PC-9 (cell line): ENCODE measurements at regions of chr12 and their contacts with region 1.

Region 1: GRCh38 chr12:38906482-38907170 is 1.2 kb upstream of the CPNE8 start:
- DNase-seq: peak; percentile 67 to 87
- H3K4me3 ChIP-seq: peak overlapping the region; percentile 80
- H3K27ac ChIP-seq: peak overlapping the region; percentile 95; the same call in 1 of the 2 replicates
- H3K4me1 ChIP-seq: peaks cover 23% of the 10 kb centered on the region
- H3K27me3 ChIP-seq: no peaks in the 10 kb centered on the region
- CTCF ChIP-seq: peak; percentile 80

Region 2: DNA sequence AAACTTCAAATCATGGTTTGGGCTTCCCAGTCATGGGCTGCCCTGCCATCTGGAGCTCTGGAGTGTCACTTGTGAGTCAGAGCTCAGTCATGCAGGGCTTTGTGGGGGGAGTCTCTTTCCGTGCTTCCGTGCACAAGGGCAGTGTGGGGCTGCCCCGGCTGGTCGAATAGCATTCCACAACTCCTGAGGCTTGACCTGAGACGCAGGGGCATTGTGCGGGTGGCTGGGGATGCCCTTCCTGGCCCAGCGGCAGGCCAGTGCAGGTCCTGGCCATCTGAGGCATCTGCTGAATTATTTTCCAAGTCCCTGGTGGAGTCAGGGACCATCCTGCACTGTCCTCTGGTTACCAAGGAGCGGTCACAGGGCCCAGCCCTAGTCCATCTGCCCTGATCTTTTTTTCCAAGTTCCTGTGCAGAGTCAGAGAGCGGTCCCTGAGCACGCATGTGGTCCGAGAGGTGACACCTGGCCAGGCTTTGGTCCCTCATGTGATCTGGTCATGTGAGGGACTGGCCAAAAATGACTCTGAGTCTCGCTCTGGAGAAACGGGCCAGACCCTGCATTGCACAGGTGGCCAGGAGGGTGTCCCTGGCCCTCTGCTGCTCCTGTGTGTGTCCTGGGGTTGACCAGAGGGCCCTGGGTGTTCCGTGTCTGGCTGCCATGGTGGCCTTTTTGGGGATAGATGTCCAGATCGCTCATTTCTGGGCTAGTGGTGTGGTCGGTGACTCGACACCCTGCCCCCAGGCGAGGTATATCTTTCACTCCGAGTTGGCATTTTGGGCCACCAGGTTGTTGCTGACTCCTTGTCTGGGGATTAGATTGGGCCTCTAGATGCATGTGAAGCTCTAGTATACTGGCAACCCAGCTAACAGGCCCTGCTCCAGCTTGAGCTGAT is 757.0 kb before region 1 on chr12:
- CTCF ChIA-PET with region 1: no interaction called
- POLR2A ChIA-PET with region 1: no interaction called
- intact Hi-C with region 1: loop called (anchors 2 kb)
- DNase-seq: peak; percentile 91 to 93
- H3K4me3 ChIP-seq: no peak overlapping the region; the same call in 1 of the 2 replicates
- H3K27ac ChIP-seq: no peak overlapping the region; the same call in 1 of the 2 replicates
- H3K4me1 ChIP-seq: peaks cover 19% of the 10 kb centered on the region
- H3K27me3 ChIP-seq: peaks cover 12% of the 10 kb centered on the region
- CTCF ChIP-seq: no peak

Region 3: DNA sequence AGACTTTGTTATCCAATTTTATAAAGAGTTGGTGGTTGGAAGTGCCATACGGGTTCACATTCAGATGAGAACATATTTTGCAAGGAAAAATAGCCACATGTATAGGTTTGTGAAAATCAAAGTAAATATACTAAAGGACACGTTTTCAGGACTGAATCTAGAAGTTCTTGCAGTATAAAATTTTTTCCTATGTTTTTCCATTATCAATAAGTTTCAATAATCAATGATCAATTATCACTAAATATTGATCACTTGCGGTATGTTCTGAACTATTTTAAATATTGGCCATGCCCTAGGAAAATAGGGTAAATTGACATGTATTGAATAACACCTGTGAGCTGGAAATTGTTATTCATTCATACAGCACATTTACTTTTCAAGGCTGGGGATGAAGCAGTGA is 564.2 kb before region 1 on chr12:
- CTCF ChIA-PET with region 1: no interaction called
- POLR2A ChIA-PET with region 1: no interaction called
- intact Hi-C with region 1: loop called (anchors 5 kb)
- DNase-seq: no peak
- H3K4me3 ChIP-seq: no peak overlapping the region
- H3K27ac ChIP-seq: no peak overlapping the region
- H3K4me1 ChIP-seq: no peaks in the 10 kb centered on the region
- H3K27me3 ChIP-seq: no peaks in the 10 kb centered on the region
- CTCF ChIP-seq: no peak

Region 4: GRCh38 chr12:38508246-38508645 is 398.4 kb before region 1 on chr12:
- CTCF ChIA-PET with region 1: no interaction called
- POLR2A ChIA-PET with region 1: no interaction called
- intact Hi-C with region 1: loop called (anchors 10 kb)
- DNase-seq: peak; percentile 50 to 72
- H3K4me3 ChIP-seq: no peak overlapping the region
- H3K27ac ChIP-seq: no peak overlapping the region
- H3K4me1 ChIP-seq: peaks cover 12% of the 10 kb centered on the region
- H3K27me3 ChIP-seq: no peaks in the 10 kb centered on the region
- CTCF ChIP-seq: no peak

Region 5: DNA sequence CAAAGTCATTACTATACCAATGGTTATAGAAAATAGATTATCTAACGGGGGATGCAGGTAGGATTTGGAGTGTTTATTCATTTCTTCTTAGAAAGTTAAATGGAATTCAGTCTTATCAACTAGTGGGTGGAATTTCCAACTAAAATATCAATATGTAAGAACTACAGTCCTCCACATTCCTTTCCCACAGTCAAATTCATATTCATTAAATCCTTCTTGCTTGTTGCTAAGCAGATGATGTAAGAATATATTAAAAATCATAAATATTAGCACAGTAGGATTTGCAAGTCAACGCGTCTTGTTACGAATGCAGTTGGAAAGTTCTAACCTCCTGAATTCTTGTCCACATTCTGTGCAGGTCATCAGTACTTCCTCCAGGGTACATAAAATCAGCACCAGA is 260.5 kb before region 1 on chr12:
- CTCF ChIA-PET with region 1: no interaction called
- POLR2A ChIA-PET with region 1: no interaction called
- intact Hi-C with region 1: no loop called
- DNase-seq: no peak
- H3K4me3 ChIP-seq: no peak overlapping the region
- H3K27ac ChIP-seq: no peak overlapping the region
- H3K4me1 ChIP-seq: peaks cover 14% of the 10 kb centered on the region; the same call in 1 of the 2 replicates
- H3K27me3 ChIP-seq: no peaks in the 10 kb centered on the region
- CTCF ChIP-seq: no peak

Region 6: GRCh38 chr12:38664661-38665269 is 241.9 kb before region 1 on chr12:
- CTCF ChIA-PET with region 1: no interaction called
- POLR2A ChIA-PET with region 1: no interaction called
- intact Hi-C with region 1: loop called (anchors 10 kb)
- DNase-seq: no peak
- H3K4me3 ChIP-seq: no peak overlapping the region
- H3K27ac ChIP-seq: no peak overlapping the region
- H3K4me1 ChIP-seq: no peaks in the 10 kb centered on the region
- H3K27me3 ChIP-seq: no peaks in the 10 kb centered on the region
- CTCF ChIP-seq: peak; percentile 66

Region 7: DNA sequence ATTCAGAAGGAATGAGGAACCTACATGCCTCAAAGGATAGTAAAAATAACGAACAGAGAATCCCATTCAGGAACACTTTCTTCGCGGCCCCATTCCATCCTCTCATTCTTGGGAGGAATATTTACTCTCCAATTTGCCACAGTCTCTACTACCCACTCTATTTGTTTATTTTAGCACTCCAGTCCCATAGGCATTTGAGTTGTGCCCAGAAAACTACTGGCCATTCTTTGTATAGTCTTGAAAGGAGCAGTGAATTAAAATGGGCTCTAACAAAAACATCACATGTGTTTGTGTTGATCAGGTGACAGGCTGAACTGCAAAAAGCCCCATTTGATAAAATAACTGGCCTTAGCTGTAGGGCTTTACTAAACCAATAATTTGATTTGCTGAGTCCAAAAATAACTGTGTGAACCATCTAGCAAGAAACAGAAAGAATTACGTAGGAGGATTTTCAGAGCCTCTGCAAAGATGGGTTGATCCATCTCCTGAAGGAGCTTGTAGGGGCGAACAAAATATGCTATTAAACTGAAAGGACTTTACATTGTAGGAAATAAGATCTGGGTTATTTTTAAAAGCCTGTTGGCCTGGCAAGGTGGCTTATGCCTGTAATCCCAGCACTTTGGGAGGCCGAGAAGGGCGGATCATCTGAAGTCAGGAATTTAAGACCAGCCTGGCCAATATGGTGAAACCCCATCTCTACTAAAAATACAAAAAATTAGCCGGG is 141.1 kb after region 1 on chr12:
- CTCF ChIA-PET with region 1: no interaction called
- POLR2A ChIA-PET with region 1: no interaction called
- intact Hi-C with region 1: no loop called
- DNase-seq: no peak
- H3K4me3 ChIP-seq: no peak overlapping the region
- H3K27ac ChIP-seq: no peak overlapping the region
- H3K4me1 ChIP-seq: no peaks in the 10 kb centered on the region
- H3K27me3 ChIP-seq: no peaks in the 10 kb centered on the region
- CTCF ChIP-seq: no peak

Region 8: DNA sequence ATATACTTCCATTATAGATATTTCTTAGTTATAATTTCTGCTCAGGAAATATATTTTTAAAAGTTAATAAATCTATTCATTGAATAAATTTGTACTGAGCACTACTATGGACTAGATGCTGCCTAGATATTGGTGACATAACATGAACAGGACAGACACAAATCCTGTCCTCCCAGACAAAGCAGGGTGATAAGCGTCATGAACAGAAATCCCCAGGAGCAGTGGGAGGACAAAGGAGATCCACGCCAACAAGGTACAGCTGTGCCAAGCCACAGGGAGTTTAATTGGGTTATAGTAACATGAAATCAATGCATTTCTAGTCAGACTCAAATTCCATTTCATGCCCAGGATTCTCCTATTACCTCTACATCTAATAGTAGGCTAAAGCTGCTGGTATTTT is 170.6 kb after region 1 on chr12:
- CTCF ChIA-PET with region 1: interaction called, 3 read pairs
- POLR2A ChIA-PET with region 1: interaction called, 21 read pairs
- intact Hi-C with region 1: no loop called
- DNase-seq: no peak
- H3K4me3 ChIP-seq: no peak overlapping the region
- H3K27ac ChIP-seq: no peak overlapping the region
- H3K4me1 ChIP-seq: no peaks in the 10 kb centered on the region
- H3K27me3 ChIP-seq: no peaks in the 10 kb centered on the region
- CTCF ChIP-seq: no peak